ENCODE measurements at regions of chr18 and their contacts with region 1.

Region 1: DNA sequence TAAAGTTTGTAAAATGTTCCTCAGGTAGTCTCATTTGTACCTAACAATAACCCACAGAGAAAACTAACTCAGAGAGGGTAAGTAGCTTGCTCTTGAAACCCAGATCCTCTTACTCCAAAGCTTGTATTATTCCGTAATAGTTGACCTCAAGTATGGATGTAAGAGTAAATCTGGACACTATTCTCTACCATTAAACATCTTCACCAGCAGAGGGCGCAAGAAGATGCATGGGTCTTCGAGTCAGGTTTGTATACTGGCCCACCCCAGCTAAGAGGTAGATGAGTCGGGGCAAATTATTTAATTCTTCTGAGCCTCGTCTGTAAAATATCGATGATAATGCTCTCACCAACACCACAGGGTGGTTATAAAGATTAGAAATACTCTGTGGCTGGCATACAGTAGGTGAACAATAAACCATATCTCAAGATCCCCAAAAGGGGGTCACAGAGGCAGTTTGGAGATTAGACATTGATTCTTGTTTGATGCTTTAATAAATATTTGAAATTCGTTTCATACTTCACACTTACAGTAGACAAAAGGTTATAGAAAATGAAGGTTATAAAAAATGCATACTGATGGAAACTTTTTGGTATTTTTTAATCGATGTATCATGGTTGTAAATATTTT is 3.5 kb upstream of the CABLES1 start:
- DNase-seq: peak in 4 of 5 donors; percentile 39 to 76 (median 62)
- ATAC-seq: peak in 3 of 4 donors; percentile 67 to 75 (median 72)
- H3K4me3 ChIP-seq: no peak overlapping the region
- H3K27ac ChIP-seq: peak overlapping the region in 1 of 12 donors; percentile 9
- H3K4me1 ChIP-seq: peaks cover 0 to 38% (median 10%) of the 10 kb centered on the region in 12 donors
- H3K27me3 ChIP-seq: peaks cover 7 to 42% (median 18%) of the 10 kb centered on the region in 9 donors
- CTCF ChIP-seq: peak; percentile 69 to 90 (median 80)
- POLR2A ChIP-seq: no peak

Region 2: GRCh38 chr18:23032030-23032582 is 99.7 kb before region 1 on chr18:
- intact Hi-C with region 1: loop called in 1 of 10 experiments (anchors 5 kb)
- DNase-seq: no peak
- ATAC-seq: no peak
- H3K4me3 ChIP-seq: no peak overlapping the region
- H3K27ac ChIP-seq: no peak overlapping the region
- H3K4me1 ChIP-seq: no peaks in the 10 kb centered on the region
- H3K27me3 ChIP-seq: no peaks in the 10 kb centered on the region
- CTCF ChIP-seq: no peak
- POLR2A ChIP-seq: no peak

Region 3: DNA sequence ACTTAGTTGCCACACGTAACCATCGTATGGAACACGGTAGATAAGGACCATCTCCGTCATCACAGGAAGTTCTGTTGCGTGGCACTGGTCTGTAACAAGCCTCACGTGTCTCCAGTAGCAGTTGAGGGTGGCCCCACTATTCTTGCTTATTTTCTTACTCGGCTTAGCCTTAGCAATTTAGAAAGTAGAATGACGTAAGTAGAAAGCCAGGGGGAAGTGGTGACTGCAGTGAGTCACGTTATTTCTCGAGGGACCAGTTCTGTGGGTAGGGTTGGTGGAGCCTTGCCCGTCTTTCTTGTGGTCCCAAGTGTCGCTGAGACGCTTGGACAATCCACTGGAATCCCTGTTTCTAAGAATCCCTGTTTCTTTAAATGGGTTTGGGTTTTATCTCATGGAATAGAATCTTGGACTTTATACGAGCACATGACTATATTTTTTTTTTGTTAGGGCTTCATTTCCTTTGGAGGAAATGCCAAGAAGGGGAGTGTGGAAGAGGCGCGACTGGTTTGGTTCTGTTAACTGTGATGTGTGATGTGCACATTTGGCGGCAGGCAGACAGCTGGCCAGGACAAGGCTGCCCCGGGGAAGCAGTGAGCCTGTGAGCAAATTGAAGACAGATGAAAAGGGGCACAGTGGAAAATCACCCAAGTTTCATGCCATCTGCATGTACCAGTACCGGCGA is 99.7 kb after region 1 on chr18:
- intact Hi-C with region 1: loop called in 5 of 10 experiments (anchors 5 to 10 kb)
- DNase-seq: peak in 4 of 5 donors; percentile 69 to 79 (median 75)
- ATAC-seq: peak; percentile 65 to 87 (median 82)
- H3K4me3 ChIP-seq: peak overlapping the region in 1 of 12 donors; percentile 5
- H3K27ac ChIP-seq: peak overlapping the region in 11 of 12 donors; percentile 50 to 90 (median 66)
- H3K4me1 ChIP-seq: peaks cover 0 to 62% (median 36%) of the 10 kb centered on the region in 12 donors
- H3K27me3 ChIP-seq: no peaks in the 10 kb centered on the region
- CTCF ChIP-seq: no peak
- POLR2A ChIP-seq: no peak

Region 4: GRCh38 chr18:23259701-23260582 is 128.1 kb after region 1 on chr18:
- intact Hi-C with region 1: loop called in 2 of 10 experiments (anchors 10 kb)
- DNase-seq: peak; percentile 76 to 85 (median 81)
- ATAC-seq: peak; percentile 76 to 90 (median 83)
- H3K4me3 ChIP-seq: peak overlapping the region in 10 of 12 donors; percentile 16 to 47 (median 26)
- H3K27ac ChIP-seq: peak overlapping the region; percentile 25 to 86 (median 67)
- H3K4me1 ChIP-seq: peaks cover 8 to 40% (median 20%) of the 10 kb centered on the region in 12 donors
- H3K27me3 ChIP-seq: no peaks in the 10 kb centered on the region
- CTCF ChIP-seq: no peak
- POLR2A ChIP-seq: no peak

Region 5: GRCh38 chr18:23356915-23357601 is 225.3 kb after region 1 on chr18:
- intact Hi-C with region 1: loop called (anchors 1 to 5 kb)
- DNase-seq: no peak
- ATAC-seq: peak in 2 of 4 donors; percentile 24 to 27
- H3K4me3 ChIP-seq: no peak overlapping the region
- H3K27ac ChIP-seq: peak overlapping the region; percentile 39 to 87 (median 67)
- H3K4me1 ChIP-seq: peaks cover 0 to 33% (median 22%) of the 10 kb centered on the region in 12 donors
- H3K27me3 ChIP-seq: no peaks in the 10 kb centered on the region
- CTCF ChIP-seq: peak in 1 of 12 donors; percentile 2
- POLR2A ChIP-seq: no peak

Region 6: DNA sequence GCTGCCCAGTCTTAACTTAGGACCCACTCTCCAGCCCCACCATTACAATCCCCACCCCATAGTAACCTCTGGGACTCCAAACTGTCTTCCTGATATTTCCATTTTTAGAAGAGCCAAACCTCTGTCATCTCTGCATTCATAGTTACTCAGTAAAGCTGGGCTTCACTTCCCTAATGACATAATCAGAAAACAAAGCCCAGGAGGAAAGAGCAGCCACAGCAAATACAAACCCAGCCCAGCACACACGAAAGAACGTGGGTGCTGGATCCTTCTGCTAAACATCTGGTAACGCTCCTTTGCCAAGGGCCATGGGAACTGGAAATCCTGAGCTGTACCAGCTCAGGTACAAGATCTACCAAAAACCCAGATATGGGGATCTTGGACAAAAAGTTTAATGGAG is 284.5 kb after region 1 on chr18:
- intact Hi-C with region 1: loop called in 3 of 10 experiments (anchors 2 to 10 kb)
- DNase-seq: no peak
- ATAC-seq: peak in 3 of 4 donors; percentile 33 to 70 (median 57)
- H3K4me3 ChIP-seq: no peak overlapping the region
- H3K27ac ChIP-seq: no peak overlapping the region
- H3K4me1 ChIP-seq: peaks cover 0 to 13% (median 0%) of the 10 kb centered on the region in 12 donors
- H3K27me3 ChIP-seq: no peaks in the 10 kb centered on the region
- CTCF ChIP-seq: no peak
- POLR2A ChIP-seq: no peak

Measured in heart left ventricle (tissue), 16 donors.